CD4-positive, alpha-beta memory T cell (primary cell): ENCODE measurements at regions of chr3 and their contacts with region 1.

Region 1: DNA sequence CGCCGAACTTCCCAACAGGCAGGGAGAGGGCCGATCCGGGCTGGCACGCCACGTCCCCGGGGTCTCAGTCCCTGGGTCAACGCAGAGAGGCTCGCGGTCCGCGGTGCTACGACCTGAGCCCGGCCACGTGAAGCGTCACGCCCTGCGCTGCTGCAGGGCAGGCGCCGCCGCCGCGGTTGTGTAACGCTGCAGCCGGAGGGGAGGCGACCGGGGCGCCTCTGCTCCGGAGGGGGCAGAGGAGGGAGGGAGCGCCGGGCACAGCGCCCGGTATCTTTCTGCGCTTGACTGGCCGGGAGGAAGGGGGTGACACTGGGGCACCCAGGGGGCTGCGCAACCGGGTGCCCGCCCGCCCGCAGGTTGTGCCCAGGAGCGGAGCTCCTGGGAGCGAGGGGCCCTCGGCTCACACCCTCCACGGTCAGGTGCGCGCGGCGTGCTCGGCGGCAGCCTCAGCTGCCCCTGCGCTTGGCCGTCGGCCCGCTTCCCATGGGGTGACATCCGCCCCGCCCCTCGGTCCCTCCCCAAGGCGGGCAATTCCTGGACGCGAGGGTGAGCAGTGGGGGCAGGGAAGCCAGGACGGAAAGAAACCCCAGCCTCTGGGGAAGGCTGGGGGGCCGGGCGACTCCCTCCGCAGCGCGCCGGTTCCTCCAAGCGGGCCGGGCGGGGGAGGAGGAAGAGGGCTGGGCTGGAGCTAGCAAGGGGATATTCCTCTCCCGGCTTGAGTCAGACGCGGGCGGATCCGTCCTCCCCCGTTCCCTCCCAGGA is 852 bp upstream of the BHLHE40 start:
- DNase-seq: peak; percentile 73 to 93 (median 78)
- H3K4me3 ChIP-seq: peak overlapping the region; percentile 54 to 93
- H3K4me3 Mint-ChIP-seq: peak overlapping the region; percentile 93 to 100 (median 98)
- H3K27ac ChIP-seq: peak overlapping the region; percentile 91
- H3K27ac Mint-ChIP-seq: peak overlapping the region; percentile 95 to 100 (median 99)
- H3K4me1 ChIP-seq: peaks cover 48% of the 10 kb centered on the region
- H3K4me1 Mint-ChIP-seq: peaks cover 23 to 64% (median 46%) of the 10 kb centered on the region in 4 donors
- H3K27me3 ChIP-seq: no peaks in the 10 kb centered on the region
- H3K27me3 Mint-ChIP-seq: no peaks in the 10 kb centered on the region

Region 2: DNA sequence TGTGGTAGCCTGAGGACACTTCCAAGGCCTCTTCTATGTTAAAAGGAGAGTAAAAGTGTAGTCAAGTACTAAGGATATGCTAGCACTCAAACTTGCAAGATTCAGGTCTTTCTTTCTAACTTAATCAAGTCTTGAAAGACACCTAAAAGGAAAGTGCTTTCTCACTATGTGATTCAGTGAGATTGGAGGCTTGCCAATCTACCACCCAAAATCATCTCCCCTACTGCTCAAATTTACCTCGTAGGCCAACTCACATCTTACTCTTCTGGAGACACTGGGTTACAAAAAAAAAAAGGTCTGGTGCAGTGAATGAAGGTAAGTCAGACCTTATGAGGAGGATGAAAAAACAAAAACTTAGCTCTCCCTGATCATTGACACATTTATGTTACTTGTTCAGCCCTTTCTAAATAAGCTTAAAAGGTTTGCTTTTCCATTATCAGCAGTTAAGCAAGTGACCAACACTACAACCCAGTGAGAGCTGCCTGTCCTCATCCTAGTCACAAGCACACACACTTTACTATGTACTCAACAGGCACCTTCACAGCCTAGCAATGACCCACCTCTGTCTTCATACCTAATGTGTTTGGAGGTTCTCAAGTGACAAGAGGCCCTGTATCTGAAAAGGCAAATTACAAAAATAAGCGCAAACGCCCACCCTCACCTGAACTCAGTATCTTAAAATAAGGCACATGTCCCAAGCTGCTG is 530.9 kb before region 1 on chr3:
- CTCF ChIA-PET with region 1: no interaction called
- POLR2A ChIA-PET with region 1: no interaction called
- intact Hi-C with region 1: no loop called
- DNase-seq: no peak
- H3K4me3 ChIP-seq: no peak overlapping the region
- H3K4me3 Mint-ChIP-seq: no peak overlapping the region
- H3K27ac ChIP-seq: no peak overlapping the region
- H3K27ac Mint-ChIP-seq: no peak overlapping the region
- H3K4me1 ChIP-seq: no peaks in the 10 kb centered on the region
- H3K4me1 Mint-ChIP-seq: peaks cover 0 to 1% (median 0%) of the 10 kb centered on the region in 4 donors
- H3K27me3 ChIP-seq: no peaks in the 10 kb centered on the region
- H3K27me3 Mint-ChIP-seq: no peaks in the 10 kb centered on the region

Region 3: GRCh38 chr3:4712143-4712542 is 266.2 kb before region 1 on chr3:
- CTCF ChIA-PET with region 1: interaction called, 49 read pairs
- POLR2A ChIA-PET with region 1: interaction called, 9 read pairs
- intact Hi-C with region 1: loop called (anchors 1 kb)
- DNase-seq: no peak
- H3K4me3 ChIP-seq: no peak overlapping the region
- H3K4me3 Mint-ChIP-seq: no peak overlapping the region
- H3K27ac ChIP-seq: no peak overlapping the region
- H3K27ac Mint-ChIP-seq: no peak overlapping the region
- H3K4me1 ChIP-seq: no peaks in the 10 kb centered on the region
- H3K4me1 Mint-ChIP-seq: peaks cover 0 to 5% (median under 1%) of the 10 kb centered on the region in 4 donors
- H3K27me3 ChIP-seq: no peaks in the 10 kb centered on the region
- H3K27me3 Mint-ChIP-seq: no peaks in the 10 kb centered on the region

Region 4: DNA sequence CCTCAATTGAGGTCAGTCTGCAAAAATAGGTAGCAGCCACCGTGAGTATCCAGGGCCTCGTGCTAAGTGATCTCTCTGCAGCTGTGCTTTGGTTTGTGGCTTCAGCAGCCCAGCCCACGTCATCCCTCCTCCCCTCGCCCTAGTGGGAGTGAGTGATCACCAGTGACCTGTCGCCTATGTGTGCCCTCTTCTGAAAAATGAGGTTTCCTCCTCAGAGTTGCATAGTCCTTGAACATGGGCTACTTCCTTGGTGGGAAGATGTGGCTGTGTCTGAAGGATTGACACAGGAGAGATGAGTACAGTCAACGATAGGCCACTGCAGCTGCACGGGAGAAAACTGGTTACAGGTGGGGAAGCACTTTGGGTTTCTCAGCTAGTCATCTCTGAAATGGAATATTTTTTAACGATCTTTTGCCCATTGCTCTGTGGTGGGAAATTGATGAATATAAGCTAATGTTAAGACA is 143.9 kb before region 1 on chr3:
- CTCF ChIA-PET with region 1: interaction called, 26 read pairs
- POLR2A ChIA-PET with region 1: interaction called, 254 read pairs
- intact Hi-C with region 1: loop called (anchors 1 kb)
- DNase-seq: peak; percentile 68 to 84 (median 75)
- H3K4me3 ChIP-seq: no peak overlapping the region
- H3K4me3 Mint-ChIP-seq: peak overlapping the region; percentile 45 to 81 (median 69)
- H3K27ac ChIP-seq: peak overlapping the region; percentile 42
- H3K27ac Mint-ChIP-seq: peak overlapping the region; percentile 83 to 97 (median 93)
- H3K4me1 ChIP-seq: peaks cover 84% of the 10 kb centered on the region
- H3K4me1 Mint-ChIP-seq: peaks cover 63 to 79% (median 74%) of the 10 kb centered on the region in 4 donors
- H3K27me3 ChIP-seq: no peaks in the 10 kb centered on the region
- H3K27me3 Mint-ChIP-seq: peaks cover 0 to 3% of the 10 kb centered on the region in 2 donors

Region 5: DNA sequence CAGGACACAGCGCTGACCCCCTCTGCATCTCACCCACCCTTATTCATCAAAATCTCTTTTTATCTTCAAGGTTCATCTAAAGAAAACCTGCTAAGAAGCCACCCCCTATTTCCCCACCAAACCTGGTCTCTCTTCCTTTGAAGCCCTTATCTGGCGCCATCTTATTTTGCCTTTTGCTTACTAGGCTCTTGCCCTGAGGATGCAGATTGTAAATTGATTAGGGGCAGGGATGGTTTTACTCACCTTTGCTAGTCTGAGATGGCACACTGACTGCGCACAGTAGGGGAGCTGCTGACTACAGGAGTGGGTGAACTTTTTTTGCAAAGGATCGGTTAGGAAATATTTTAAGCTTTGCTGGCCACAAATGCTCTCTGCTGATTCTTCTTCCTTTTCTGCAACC is 78.1 kb before region 1 on chr3:
- CTCF ChIA-PET with region 1: interaction called, 9 read pairs
- POLR2A ChIA-PET with region 1: interaction called, 61 read pairs
- intact Hi-C with region 1: loop called (anchors 2 kb)
- DNase-seq: peak in 2 of 5 donors; percentile 1 to 51
- H3K4me3 ChIP-seq: no peak overlapping the region
- H3K4me3 Mint-ChIP-seq: peak overlapping the region in 6 of 8 donors; percentile 18 to 76 (median 46)
- H3K27ac ChIP-seq: no peak overlapping the region
- H3K27ac Mint-ChIP-seq: peak overlapping the region; percentile 44 to 92 (median 78)
- H3K4me1 ChIP-seq: peaks cover 43% of the 10 kb centered on the region
- H3K4me1 Mint-ChIP-seq: peaks cover 34 to 63% (median 44%) of the 10 kb centered on the region in 4 donors
- H3K27me3 ChIP-seq: no peaks in the 10 kb centered on the region
- H3K27me3 Mint-ChIP-seq: no peaks in the 10 kb centered on the region

Region 6: GRCh38 chr3:4994823-4995499 is 16.6 kb after region 1 on chr3:
- CTCF ChIA-PET with region 1: interaction called, 13 read pairs
- POLR2A ChIA-PET with region 1: interaction called, 40 read pairs
- intact Hi-C with region 1: no loop called
- DNase-seq: no peak
- H3K4me3 ChIP-seq: no peak overlapping the region
- H3K4me3 Mint-ChIP-seq: no peak overlapping the region
- H3K27ac ChIP-seq: no peak overlapping the region
- H3K27ac Mint-ChIP-seq: no peak overlapping the region
- H3K4me1 ChIP-seq: peaks cover 10% of the 10 kb centered on the region
- H3K4me1 Mint-ChIP-seq: peaks cover 3 to 8% (median 5%) of the 10 kb centered on the region in 4 donors
- H3K27me3 ChIP-seq: no peaks in the 10 kb centered on the region
- H3K27me3 Mint-ChIP-seq: no peaks in the 10 kb centered on the region

Region 7: DNA sequence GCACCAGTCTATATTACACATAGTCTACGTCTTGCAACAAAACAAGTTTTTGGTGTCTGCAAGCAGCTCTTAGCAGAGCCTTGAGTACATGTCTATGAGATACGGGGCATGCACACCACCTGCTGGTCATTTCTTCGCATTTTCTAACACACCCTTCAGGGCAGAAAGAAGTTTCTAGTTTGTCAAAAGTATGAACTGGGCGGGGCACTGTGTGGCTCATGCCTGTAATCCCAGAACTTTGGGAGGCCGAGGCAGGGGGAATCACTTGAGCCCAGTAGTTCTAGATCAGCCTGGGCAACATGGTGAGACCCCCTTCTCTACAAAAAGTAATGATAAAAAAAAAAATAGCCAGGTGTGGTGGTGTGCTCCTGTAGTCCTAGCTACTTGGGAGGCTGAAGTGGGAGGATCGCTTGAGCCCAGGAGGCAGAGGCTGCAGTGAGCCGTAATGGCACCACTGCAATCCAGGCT is 79.5 kb after region 1 on chr3:
- CTCF ChIA-PET with region 1: interaction called, 5 read pairs
- POLR2A ChIA-PET with region 1: no interaction called
- intact Hi-C with region 1: loop called (anchors 2 kb)
- DNase-seq: peak; percentile 66 to 82 (median 70)
- H3K4me3 ChIP-seq: no peak overlapping the region
- H3K4me3 Mint-ChIP-seq: no peak overlapping the region
- H3K27ac ChIP-seq: no peak overlapping the region
- H3K27ac Mint-ChIP-seq: no peak overlapping the region
- H3K4me1 ChIP-seq: peaks cover 3% of the 10 kb centered on the region
- H3K4me1 Mint-ChIP-seq: peaks cover 0 to 4% (median 1%) of the 10 kb centered on the region in 4 donors
- H3K27me3 ChIP-seq: no peaks in the 10 kb centered on the region
- H3K27me3 Mint-ChIP-seq: peaks cover 1% of the 10 kb centered on the region in 2 donors